ENCODE measurements at regions of chr14 and their contacts with region 1.

Region 1: GRCh38 chr14:22598099-22598899 is at the start of gene ABHD4:
- DNase-seq: peak; percentile 84 to 91 (median 86)
- ATAC-seq: peak; percentile 93 to 99 (median 98)
- H3K4me3 ChIP-seq: peak within 1 kb of the TSS; percentile 43 to 91 (median 82)
- H3K27ac ChIP-seq: peak within 1 kb of the TSS in 11 of 12 donors; percentile 59 to 91 (median 83)
- H3K4me1 ChIP-seq: peaks cover 3 to 27% (median 17%) of the 10 kb centered on the region in 12 donors
- H3K27me3 ChIP-seq: peaks cover 0 to 5% (median 0%) of the 10 kb centered on the region in 9 donors
- CTCF ChIP-seq: no peak
- POLR2A ChIP-seq: peak in 1 of 2 donors; percentile 78
- total RNA-seq, gene ABHD4: 16.8 to 35.5 (median 25.9) TPM

Region 2: GRCh38 chr14:22715186-22715812 is 117.0 kb after region 1 on chr14:
- intact Hi-C with region 1: loop called in 1 of 10 experiments (anchors 10 kb)
- DNase-seq: no peak
- ATAC-seq: no peak
- H3K4me3 ChIP-seq: no peak overlapping the region
- H3K27ac ChIP-seq: no peak overlapping the region
- H3K4me1 ChIP-seq: peaks cover 0 to 9% (median 0%) of the 10 kb centered on the region in 12 donors
- H3K27me3 ChIP-seq: peaks cover 0 to 27% (median 6%) of the 10 kb centered on the region in 9 donors
- CTCF ChIP-seq: no peak
- POLR2A ChIP-seq: no peak

Measured in heart left ventricle (tissue), 16 donors.